Activated CD4-positive, alpha-beta T cell treated with anti-CD3 and anti-CD28 coated beads for 36 hours (primary cell): ENCODE measurements at regions of chr3 and their contacts with region 1.

Region 1: DNA sequence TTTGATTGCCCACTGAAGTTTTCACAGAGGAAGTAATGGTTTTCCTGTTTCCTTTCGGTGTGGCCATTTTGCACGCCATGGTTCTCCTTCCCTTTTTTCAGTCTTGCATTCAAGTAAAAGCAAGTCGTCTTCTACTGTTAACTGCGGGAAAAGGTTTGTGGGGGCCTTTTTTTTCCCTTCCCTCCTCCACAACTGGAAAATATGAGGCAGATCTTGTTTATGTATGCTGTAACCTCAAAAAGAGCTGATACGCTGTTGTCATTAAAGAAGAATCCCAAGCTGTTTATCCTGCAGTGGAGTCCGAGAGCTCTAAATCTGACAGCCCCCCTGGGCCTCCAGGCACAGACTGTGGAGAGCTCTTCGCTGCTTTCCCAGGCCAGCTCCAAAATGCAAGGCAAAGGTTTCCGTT is 40.4 kb downstream of the FILIP1L start:
- DNase-seq: peak; percentile 12
- ATAC-seq: no peak
- H3K4me3 Mint-ChIP-seq: peak overlapping the region; percentile 16
- H3K27ac Mint-ChIP-seq: peak overlapping the region; percentile 60
- H3K4me1 Mint-ChIP-seq: peaks cover 48% of the 10 kb centered on the region
- H3K27me3 Mint-ChIP-seq: no peaks in the 10 kb centered on the region

Region 2: GRCh38 chr3:98670020-98670419 is 1403.9 kb before region 1 on chr3:
- CTCF ChIA-PET with region 1: no interaction called
- POLR2A ChIA-PET with region 1: no interaction called
- intact Hi-C with region 1: no loop called
- DNase-seq: no peak
- ATAC-seq: no peak
- H3K4me3 Mint-ChIP-seq: no peak overlapping the region
- H3K27ac Mint-ChIP-seq: no peak overlapping the region
- H3K4me1 Mint-ChIP-seq: no peaks in the 10 kb centered on the region
- H3K27me3 Mint-ChIP-seq: no peaks in the 10 kb centered on the region

Region 3: DNA sequence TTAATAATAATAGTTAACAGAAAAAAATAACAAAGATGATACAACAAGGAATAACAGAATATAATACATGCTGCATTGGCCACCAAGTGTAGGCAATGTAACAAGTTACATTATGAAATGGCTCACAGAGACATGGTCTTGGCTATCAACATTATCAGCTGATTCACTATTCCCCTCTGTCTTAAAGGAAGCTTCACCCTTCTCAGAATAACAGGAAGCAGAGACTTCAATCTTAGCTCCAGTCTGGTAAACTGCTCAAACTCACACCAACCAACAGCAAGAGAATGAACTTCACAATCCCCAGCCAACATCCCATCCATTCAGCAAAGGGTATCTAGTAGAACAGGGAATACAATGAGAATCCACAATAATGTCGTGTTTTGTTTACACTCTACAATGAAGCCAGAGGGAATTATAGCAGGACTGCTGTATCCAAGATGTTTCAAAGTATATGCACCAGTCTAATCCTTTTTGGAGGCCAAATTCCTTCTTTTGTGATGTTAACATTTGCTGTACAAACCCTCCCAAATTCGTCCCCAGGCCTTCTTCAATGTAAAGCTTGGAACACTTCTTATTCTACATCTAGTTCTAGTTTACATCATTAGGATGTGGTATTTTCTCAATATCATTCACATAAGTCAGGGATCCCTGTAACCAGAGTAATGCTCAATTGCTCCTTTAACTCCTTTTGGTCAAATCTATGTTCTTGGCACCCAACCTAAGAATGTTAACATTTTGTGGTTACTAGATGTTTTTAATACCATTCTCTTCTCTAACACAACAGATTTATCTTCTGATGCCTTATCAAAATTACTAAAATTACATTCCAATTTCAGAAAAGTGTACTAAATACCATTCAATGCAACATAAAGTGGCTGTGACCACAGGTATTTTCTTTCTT is 308.6 kb before region 1 on chr3:
- CTCF ChIA-PET with region 1: no interaction called
- POLR2A ChIA-PET with region 1: no interaction called
- intact Hi-C with region 1: no loop called
- DNase-seq: no peak
- ATAC-seq: no peak
- H3K4me3 Mint-ChIP-seq: no peak overlapping the region
- H3K27ac Mint-ChIP-seq: no peak overlapping the region
- H3K4me1 Mint-ChIP-seq: no peaks in the 10 kb centered on the region
- H3K27me3 Mint-ChIP-seq: peaks cover 3% of the 10 kb centered on the region

Region 4: GRCh38 chr3:99833617-99834205 is 240.2 kb before region 1 on chr3:
- CTCF ChIA-PET with region 1: no interaction called
- POLR2A ChIA-PET with region 1: no interaction called
- intact Hi-C with region 1: loop called (anchors 2 to 10 kb)
- DNase-seq: no peak
- ATAC-seq: no peak
- H3K4me3 Mint-ChIP-seq: no peak overlapping the region
- H3K27ac Mint-ChIP-seq: no peak overlapping the region
- H3K4me1 Mint-ChIP-seq: peaks cover 8% of the 10 kb centered on the region
- H3K27me3 Mint-ChIP-seq: no peaks in the 10 kb centered on the region

Region 5: DNA sequence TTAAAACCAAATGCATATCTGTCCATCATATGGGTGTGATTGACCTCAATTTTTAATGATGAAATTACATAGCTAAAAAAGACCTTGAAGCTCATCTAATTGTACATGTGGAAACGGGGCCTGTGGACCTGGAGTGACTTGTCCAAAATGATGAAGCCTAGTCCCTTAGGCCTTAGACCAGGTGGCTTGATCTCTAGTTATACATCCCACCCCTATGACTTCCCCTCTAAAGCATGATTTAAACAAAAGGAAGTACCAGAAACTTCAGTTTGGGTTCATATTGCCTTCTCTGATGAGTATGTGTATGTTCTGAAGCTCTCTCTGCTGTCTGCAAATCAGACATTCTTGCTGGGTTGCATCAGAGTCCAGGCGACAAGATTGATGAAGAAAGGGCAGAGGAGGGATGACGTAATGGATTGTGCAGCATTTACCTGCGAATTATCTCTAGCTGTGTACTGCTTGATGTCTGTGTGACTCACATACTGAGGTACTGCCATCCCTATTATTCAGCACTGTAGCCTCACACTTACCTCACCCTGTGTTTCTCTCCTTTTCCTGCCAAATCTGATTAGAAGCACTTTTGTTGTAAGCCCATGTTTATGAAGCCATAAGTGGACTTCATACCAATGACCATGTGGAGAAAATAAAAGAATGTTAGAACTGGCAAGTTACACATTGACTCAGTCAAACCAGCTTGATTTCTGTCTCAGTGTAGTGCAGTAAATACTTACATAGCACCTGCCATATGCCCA is 71.1 kb before region 1 on chr3:
- CTCF ChIA-PET with region 1: no interaction called
- POLR2A ChIA-PET with region 1: no interaction called
- intact Hi-C with region 1: no loop called
- DNase-seq: peak; percentile 10
- ATAC-seq: peak; percentile 84
- H3K4me3 Mint-ChIP-seq: no peak overlapping the region
- H3K27ac Mint-ChIP-seq: no peak overlapping the region
- H3K4me1 Mint-ChIP-seq: peaks cover 10% of the 10 kb centered on the region
- H3K27me3 Mint-ChIP-seq: no peaks in the 10 kb centered on the region

Region 6: DNA sequence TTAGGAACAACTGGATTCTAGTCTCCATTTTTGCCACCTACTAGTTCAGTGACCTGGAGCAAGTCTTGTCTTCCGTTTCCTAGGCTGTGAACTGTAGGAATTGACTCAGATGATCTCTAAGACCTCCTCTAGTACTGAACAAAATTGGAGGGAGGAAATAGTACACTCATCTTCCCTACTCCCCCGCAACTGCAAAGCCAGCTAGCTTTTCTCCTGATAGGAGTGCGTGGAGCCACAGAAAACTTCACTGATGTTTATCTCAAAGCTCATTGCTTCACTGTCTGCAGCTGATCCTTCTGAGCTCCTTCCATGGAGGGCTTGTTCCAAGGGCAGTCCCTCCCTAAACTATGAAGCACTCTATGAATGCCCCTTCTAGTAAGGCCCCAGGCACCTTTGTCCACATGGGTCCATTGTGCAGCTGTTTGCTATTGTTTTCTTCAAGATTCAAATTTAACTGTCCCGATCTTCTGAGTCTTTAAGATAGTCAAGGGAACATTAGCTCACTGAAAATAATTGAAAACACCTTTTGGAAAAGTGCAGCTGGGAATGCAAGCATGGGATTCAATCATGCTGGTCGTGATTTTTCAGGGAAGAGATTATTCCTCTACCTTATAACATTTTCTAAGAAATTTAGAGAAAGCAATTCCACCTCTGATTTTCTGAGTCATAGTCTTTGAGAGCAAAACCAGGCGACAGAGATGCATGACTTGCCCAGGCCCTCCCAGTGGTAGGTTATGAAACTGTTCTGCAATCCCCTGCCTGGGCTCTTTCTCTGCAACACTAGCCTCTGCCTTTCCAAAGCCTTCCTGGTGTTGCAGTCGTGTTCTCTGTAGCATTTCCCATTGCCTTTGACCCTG is 16.1 kb after region 1 on chr3:
- CTCF ChIA-PET with region 1: interaction called, 14 read pairs
- POLR2A ChIA-PET with region 1: interaction called, 3 read pairs
- intact Hi-C with region 1: no loop called
- DNase-seq: peak; percentile 50
- ATAC-seq: peak; percentile 81
- H3K4me3 Mint-ChIP-seq: no peak overlapping the region
- H3K27ac Mint-ChIP-seq: no peak overlapping the region
- H3K4me1 Mint-ChIP-seq: peaks cover 21% of the 10 kb centered on the region
- H3K27me3 Mint-ChIP-seq: no peaks in the 10 kb centered on the region

Region 7: DNA sequence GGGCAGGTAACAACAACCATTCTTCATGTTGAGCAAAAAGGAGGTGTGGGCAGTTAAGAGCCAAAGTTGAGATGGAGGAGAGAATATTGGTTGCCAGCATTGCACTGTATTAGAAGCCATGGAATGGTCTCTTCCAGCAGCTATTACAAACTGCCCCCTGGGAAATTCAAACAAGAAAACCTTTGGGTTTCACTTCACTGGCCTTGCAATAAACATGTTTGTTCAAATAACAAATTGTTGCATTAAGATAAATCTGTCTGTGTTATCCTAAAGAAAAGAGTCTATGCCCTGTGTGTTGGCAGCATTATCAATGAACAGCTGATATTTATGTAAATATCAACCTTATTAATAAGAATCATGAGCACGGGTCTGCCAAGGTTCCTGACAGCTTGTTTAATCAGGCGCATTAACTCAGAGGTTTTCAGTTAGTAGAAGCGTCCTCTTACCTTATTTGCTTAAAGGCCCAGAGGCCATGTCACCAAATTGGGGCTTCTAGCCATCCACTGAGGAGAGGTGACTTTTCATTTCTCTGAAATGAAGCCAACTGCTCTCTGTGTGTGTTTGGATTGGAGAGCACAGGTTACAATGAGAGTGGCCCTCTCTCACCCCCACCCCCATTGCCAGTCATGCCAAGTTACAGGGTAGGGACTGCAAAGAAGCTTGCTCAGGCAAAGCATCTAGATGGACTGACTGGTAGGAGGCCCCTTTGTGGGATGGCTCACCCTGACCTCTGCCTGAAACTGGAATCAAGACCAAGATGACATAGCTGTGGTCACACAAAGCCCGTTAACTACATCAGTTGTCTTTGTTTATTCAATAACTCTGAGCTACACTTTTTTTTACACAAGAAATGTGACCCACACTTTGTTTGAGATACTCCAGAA is 29.9 kb after region 1 on chr3:
- CTCF ChIA-PET with region 1: no interaction called
- POLR2A ChIA-PET with region 1: no interaction called
- intact Hi-C with region 1: loop called in 1 of 2 experiments (anchors 2 kb)
- DNase-seq: peak; percentile 29
- ATAC-seq: peak; percentile 77
- H3K4me3 Mint-ChIP-seq: no peak overlapping the region
- H3K27ac Mint-ChIP-seq: peak overlapping the region; percentile 7
- H3K4me1 Mint-ChIP-seq: peaks cover 26% of the 10 kb centered on the region
- H3K27me3 Mint-ChIP-seq: no peaks in the 10 kb centered on the region

Region 8: GRCh38 chr3:100254168-100254777 is 180.4 kb after region 1 on chr3:
- CTCF ChIA-PET with region 1: interaction called, 27 read pairs
- POLR2A ChIA-PET with region 1: no interaction called
- intact Hi-C with region 1: loop called (anchors 1 kb)
- DNase-seq: peak; percentile 58
- ATAC-seq: peak; percentile 80
- H3K4me3 Mint-ChIP-seq: no peak overlapping the region
- H3K27ac Mint-ChIP-seq: no peak overlapping the region
- H3K4me1 Mint-ChIP-seq: peaks cover 11% of the 10 kb centered on the region
- H3K27me3 Mint-ChIP-seq: peaks cover 2% of the 10 kb centered on the region